ENCODE measurements at regions of chr18 and their contacts with region 1.

Region 1: DNA sequence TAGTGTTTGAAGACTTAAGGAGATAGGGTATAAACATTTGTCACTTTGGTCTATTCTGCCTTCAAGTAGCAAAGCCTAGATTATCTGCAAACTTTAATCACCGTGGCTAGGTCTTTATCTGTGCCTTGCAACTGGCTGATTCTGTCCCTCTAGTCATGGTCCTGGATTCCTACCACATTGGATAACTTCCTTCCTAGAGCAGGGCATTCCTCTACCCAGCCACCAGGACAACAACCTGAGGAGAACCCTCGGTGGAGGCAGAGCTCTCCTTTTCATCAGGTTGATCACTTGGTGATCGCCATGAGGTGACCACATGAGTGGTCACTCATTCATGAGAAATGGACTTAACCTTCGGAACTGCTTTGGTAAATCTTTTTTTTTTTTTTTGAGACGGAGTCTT is 25.3 kb upstream of the PTPRM start:
- DNase-seq: no peak
- ATAC-seq: no peak
- H3K4me3 ChIP-seq: no peak overlapping the region
- H3K27ac ChIP-seq: no peak overlapping the region
- H3K4me1 ChIP-seq: peaks cover 0 to 5% (median 0%) of the 10 kb centered on the region in 9 donors
- H3K27me3 ChIP-seq: no peaks in the 10 kb centered on the region
- CTCF ChIP-seq: no peak

Region 2: DNA sequence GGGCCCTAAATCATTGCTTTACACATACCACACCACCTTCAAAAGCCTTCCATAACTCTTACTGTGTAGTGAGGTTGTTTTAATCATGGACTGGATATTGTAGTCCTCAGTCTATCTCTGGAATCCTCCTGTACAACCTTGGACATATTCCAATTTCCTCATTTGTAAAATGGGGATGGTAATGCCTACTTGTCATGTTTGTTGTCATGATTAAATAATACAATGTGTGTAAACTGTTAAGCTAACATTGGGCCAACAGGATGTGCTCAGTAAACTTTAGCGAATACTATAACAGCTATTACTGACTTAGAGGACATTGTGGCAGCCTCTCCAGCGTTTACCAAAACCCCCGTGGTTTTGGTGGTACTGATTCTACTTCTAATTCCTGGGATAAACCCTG is 49.5 kb before region 1 on chr18:
- intact Hi-C with region 1: loop called in 1 of 10 experiments (anchors 5 kb)
- DNase-seq: no peak
- ATAC-seq: no peak
- H3K4me3 ChIP-seq: no peak overlapping the region
- H3K27ac ChIP-seq: no peak overlapping the region
- H3K4me1 ChIP-seq: no peaks in the 10 kb centered on the region
- H3K27me3 ChIP-seq: no peaks in the 10 kb centered on the region
- CTCF ChIP-seq: no peak

Region 3: DNA sequence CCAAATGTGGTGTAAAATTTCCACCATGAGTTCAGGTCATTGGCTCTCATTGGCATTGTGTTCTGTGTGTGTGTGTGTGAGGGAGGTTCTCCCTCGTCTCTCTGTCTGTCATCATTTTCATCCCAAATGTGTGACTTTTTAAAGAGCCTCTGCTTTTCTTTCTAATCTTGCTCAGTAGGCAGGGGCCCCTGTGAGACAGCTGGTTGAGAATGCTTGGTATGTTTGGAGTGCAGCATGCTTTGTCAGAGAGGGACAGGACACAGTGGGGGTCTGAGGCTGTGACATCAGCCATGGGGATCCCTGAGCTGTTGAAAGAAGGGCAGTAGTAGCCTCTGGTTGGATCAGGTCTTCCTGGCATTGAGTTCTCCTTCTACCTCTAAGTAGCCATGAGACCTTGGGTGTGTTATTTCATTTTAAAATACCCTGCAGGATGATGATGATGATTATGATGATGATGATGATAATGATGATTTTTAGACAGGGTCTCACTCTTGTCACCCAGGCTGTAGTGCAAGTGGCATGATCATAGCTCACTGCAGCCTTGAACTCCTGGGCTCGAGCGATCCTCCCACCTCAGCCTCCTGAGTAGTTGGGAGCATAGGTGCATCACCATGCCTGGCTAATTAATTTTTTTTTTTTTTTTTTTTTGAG is 36.0 kb after region 1 on chr18:
- intact Hi-C with region 1: no loop called
- DNase-seq: no peak
- ATAC-seq: peak in 2 of 8 donors; percentile 34 to 55
- H3K4me3 ChIP-seq: no peak overlapping the region
- H3K27ac ChIP-seq: peak overlapping the region in 2 of 10 donors; percentile 24 to 36
- H3K4me1 ChIP-seq: peaks cover 2 to 94% (median 68%) of the 10 kb centered on the region in 9 donors
- H3K27me3 ChIP-seq: no peaks in the 10 kb centered on the region
- CTCF ChIP-seq: no peak